Activated naive CD4-positive, alpha-beta T cell treated with anti-CD3 and anti-CD28 coated beads for 36 hours (primary cell): ENCODE measurements at regions of chr4 and their contacts with region 1.

Region 1: DNA sequence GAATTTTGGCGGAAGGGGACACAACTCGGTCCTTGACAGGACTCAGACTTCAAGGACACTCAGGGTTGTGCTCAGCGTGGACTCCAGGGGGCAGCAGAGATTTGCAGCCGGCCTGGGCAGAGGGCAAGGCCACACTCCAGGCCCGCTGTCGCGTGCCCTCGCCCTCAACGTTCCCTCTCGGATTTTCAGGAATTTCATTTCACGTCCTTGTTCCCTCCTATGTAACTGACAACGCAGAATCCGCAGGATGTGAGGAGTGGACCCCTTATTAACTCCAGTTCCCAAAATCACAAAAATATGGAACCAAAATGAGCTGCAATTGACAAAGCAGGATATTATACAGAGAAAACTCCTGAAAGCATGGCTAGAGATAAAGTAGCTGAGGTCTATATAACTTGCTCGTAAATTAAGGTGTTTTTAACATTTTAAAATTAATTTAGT is 21.0 kb upstream of the DCTD start:
- DNase-seq: peak; percentile 81
- H3K4me3 Mint-ChIP-seq: no peak overlapping the region
- H3K27ac Mint-ChIP-seq: no peak overlapping the region
- H3K4me1 Mint-ChIP-seq: peaks cover 6% of the 10 kb centered on the region
- H3K27me3 Mint-ChIP-seq: peaks cover 7% of the 10 kb centered on the region

Region 2: GRCh38 chr4:182925298-182925738 is 12.9 kb before region 1 on chr4:
- CTCF ChIA-PET with region 1: interaction called, 16 read pairs
- intact Hi-C with region 1: no loop called
- DNase-seq: peak; percentile 80
- H3K4me3 Mint-ChIP-seq: no peak overlapping the region
- H3K27ac Mint-ChIP-seq: no peak overlapping the region
- H3K4me1 Mint-ChIP-seq: peaks cover 2% of the 10 kb centered on the region
- H3K27me3 Mint-ChIP-seq: peaks cover 4% of the 10 kb centered on the region

Region 3: DNA sequence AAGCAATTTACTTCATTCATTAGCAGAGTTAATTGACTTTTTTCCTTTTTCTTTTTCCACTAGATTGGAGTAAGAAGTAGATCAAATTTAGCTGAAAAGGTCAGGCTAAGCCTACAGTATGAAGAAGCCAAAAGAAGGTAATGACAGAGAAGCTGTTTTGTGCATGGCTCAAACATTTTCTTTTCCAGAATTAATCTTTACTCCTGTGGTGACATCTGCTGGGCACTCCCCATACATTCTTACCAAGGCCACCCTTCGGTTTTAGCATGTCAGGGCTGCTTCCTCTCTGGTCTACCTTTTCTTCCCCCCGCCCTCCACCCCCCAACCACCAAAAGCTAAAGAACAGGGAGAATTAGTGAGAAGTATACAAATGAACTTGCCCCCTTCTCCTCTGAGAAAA is 311.6 kb after region 1 on chr4:
- CTCF ChIA-PET with region 1: interaction called, 138 read pairs
- intact Hi-C with region 1: loop called (anchors 1 kb)
- DNase-seq: peak; percentile 39
- H3K4me3 Mint-ChIP-seq: no peak overlapping the region
- H3K27ac Mint-ChIP-seq: no peak overlapping the region
- H3K4me1 Mint-ChIP-seq: no peaks in the 10 kb centered on the region
- H3K27me3 Mint-ChIP-seq: no peaks in the 10 kb centered on the region

Region 4: DNA sequence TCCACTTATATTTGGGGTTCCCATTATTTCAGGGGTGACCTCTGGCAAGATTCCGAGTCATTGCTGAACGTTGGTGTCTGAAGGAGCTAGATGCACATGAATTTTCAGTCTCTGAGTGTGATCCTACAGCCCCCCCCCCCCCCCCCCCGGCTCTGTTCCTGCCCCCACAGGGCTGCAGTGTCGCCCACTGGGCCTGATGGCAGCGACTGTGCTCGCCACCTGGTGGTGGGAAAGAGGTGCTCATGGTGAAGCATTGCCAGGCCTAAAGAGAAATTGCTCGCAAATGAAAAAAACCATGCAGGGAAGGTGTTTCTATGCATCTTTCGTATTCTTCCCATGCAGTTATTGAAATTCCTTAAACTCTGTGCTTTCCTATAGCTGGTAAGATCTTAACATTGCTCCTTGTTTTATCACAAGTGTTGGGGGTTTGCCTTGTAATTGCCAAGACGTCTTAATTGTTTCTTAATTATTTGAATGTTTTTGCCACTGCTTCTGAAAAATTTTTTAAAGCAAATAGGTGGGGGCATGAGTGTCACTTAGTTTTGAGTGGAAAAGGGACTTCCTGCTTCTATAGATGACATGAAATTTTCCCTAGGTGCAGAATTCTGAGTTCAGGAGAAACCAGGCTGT is 318.6 kb after region 1 on chr4:
- CTCF ChIA-PET with region 1: interaction called, 138 read pairs
- intact Hi-C with region 1: loop called (anchors 1 kb)
- DNase-seq: peak; percentile 60
- H3K4me3 Mint-ChIP-seq: no peak overlapping the region
- H3K27ac Mint-ChIP-seq: no peak overlapping the region
- H3K4me1 Mint-ChIP-seq: no peaks in the 10 kb centered on the region
- H3K27me3 Mint-ChIP-seq: no peaks in the 10 kb centered on the region

Region 5: GRCh38 chr4:183407128-183407585 is 468.9 kb after region 1 on chr4:
- CTCF ChIA-PET with region 1: no interaction called
- intact Hi-C with region 1: loop called (anchors 1 kb)
- DNase-seq: peak; percentile 94
- H3K4me3 Mint-ChIP-seq: peak overlapping the region; percentile 76
- H3K27ac Mint-ChIP-seq: peak overlapping the region; percentile 79
- H3K4me1 Mint-ChIP-seq: peaks cover 6% of the 10 kb centered on the region
- H3K27me3 Mint-ChIP-seq: no peaks in the 10 kb centered on the region